ENCODE measurements at regions of chr3 and their contacts with region 1.

Region 1: GRCh38 chr3:66544619-66545429 is 44.0 kb upstream of the LRIG1 start:
- DNase-seq: no peak
- ATAC-seq: no peak
- H3K4me3 ChIP-seq: no peak overlapping the region
- H3K27ac ChIP-seq: no peak overlapping the region
- H3K4me1 ChIP-seq: no peaks in the 10 kb centered on the region
- H3K27me3 ChIP-seq: no peaks in the 10 kb centered on the region
- CTCF ChIP-seq: no peak
- POLR2A ChIP-seq: no peak

Region 2: GRCh38 chr3:66507423-66508260 is 37.2 kb before region 1 on chr3:
- intact Hi-C with region 1: loop called in 1 of 10 experiments (anchors 2 kb)
- DNase-seq: peak in 4 of 5 donors; percentile 55 to 76 (median 66)
- ATAC-seq: peak; percentile 87 to 97 (median 94)
- H3K4me3 ChIP-seq: no peak overlapping the region
- H3K27ac ChIP-seq: peak overlapping the region in 10 of 12 donors; percentile 8 to 76 (median 60)
- H3K4me1 ChIP-seq: peaks cover 0 to 9% (median 0%) of the 10 kb centered on the region in 12 donors
- H3K27me3 ChIP-seq: no peaks in the 10 kb centered on the region
- CTCF ChIP-seq: no peak
- POLR2A ChIP-seq: no peak

Region 3: GRCh38 chr3:66998113-66998903 is 453.5 kb after region 1 on chr3 and contains the start of gene KBTBD8:
- intact Hi-C with region 1: no loop called
- DNase-seq: peak; percentile 98 to 99 (median 99)
- ATAC-seq: peak in 3 of 4 donors; percentile 98 to 100 (median 100)
- H3K4me3 ChIP-seq: peak within 1 kb of the TSS; percentile 58 to 94 (median 84)
- H3K27ac ChIP-seq: peak within 1 kb of the TSS; percentile 16 to 87 (median 78)
- H3K4me1 ChIP-seq: peaks cover 0 to 36% (median 8%) of the 10 kb centered on the region in 12 donors
- H3K27me3 ChIP-seq: peaks cover 0 to 14% (median 0%) of the 10 kb centered on the region in 9 donors
- CTCF ChIP-seq: no peak
- POLR2A ChIP-seq: peak in 1 of 2 donors; percentile 71
- total RNA-seq, gene KBTBD8: 2.4 to 9.0 (median 6.4) TPM